ENCODE measurements at regions of chr12 and their contacts with region 1.

Region 1: DNA sequence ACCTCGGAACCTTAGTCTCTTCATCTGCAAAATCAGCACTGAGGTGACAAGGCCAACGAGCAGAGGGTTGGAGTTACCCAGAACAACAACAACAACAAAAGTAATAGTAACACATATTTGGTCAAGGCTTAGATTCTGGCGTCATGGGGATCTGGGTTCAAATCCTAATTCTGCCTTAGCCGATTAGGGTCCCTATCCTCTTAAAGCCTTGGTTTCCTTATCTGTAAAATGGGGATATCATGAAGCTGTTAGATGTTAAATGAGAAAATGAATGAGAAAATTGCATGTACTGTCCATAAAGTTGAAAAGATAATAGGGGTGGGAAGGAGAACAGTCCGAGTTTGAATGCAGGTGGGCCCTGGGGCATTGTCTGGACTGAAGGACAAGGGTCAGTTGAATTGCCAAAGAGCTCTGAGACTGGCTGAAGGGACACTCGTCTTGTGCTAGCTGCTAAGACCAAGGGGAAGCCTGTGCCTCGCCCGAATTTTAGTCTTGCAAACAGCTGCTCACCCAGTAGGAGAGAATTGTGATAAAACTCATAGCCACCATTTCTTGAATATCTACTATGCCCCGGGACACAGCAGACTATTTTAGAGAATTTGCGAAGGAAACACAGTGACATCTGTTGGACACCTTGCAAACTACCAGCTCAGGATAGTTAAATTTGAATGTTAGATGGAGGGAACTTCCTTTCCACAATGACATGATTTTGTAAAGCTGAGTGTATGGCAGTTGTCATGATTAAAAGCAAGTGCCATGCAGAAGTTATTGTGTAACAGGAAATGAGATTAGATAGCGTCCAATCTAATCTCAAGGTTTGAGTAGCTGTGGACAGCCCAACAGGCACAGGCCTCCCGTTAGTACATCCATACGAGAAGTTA is 6.8 kb upstream of the HNF1A start:
- DNase-seq: peak; percentile 57
- ATAC-seq: peak; percentile 98
- H3K4me3 Mint-ChIP-seq: no peak overlapping the region
- H3K27ac Mint-ChIP-seq: no peak overlapping the region
- H3K4me1 Mint-ChIP-seq: peaks cover 2% of the 10 kb centered on the region
- H3K27me3 Mint-ChIP-seq: no peaks in the 10 kb centered on the region
- CTCF ChIP-seq: peak; percentile 79

Region 2: DNA sequence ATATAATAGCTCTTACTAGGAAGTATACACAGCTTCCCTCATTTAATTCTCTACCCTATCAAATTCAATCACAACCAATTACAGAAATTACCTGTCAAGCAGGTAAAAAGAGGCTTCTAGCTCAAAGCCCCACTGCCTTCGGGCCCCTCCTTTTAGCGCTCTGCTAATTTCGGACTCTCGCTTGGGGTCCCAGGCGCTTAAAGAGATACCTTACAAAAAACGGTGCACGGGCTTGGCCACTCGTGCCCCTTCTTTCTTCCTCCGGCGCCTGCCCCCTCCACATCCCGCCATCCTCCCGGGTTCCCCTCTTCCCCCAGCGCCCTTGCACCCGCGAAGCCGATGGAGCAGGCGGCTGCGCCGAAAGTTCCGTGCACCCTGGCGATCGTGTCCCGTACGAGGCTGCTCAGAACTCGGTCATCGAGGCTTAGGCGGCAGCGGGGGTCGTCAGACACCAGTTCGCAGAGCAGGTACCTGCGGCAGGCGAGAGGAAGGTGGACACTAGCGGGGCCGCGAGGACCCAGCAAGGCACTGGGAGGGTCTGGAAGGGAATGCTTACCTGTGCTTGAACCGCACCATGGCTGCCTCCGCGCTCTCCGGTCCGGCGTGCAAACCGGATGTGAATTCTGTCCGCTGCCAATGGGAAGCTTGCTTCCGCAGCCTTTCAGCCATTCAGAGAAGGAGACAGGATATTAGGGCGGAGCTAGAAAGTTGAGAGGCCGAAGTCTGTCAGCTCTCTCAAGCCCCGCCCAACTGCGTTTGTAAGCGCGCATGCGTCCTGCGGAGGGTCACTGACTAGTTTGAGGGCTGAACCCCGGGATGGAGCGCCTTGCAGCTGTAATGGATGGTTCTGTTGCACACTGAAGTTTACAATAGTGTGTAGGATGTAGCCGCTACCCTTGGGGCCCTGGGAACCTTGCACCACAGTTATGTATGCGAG is 390.5 kb before region 1 on chr12 and contains the start of gene POP5:
- CTCF ChIA-PET with region 1: interaction called, 23 read pairs
- POLR2A ChIA-PET with region 1: no interaction called
- intact Hi-C with region 1: loop called (anchors 10 kb)
- DNase-seq: peak; percentile 97
- ATAC-seq: peak; percentile 96
- H3K4me3 Mint-ChIP-seq: peak within 1 kb of the TSS; percentile 98
- H3K27ac Mint-ChIP-seq: peak within 1 kb of the TSS; percentile 90
- H3K4me1 Mint-ChIP-seq: peaks cover 36% of the 10 kb centered on the region
- H3K27me3 Mint-ChIP-seq: peaks cover 13% of the 10 kb centered on the region
- CTCF ChIP-seq: no peak
- total RNA-seq, gene POP5: 44.3 to 51.1 TPM

Region 3: DNA sequence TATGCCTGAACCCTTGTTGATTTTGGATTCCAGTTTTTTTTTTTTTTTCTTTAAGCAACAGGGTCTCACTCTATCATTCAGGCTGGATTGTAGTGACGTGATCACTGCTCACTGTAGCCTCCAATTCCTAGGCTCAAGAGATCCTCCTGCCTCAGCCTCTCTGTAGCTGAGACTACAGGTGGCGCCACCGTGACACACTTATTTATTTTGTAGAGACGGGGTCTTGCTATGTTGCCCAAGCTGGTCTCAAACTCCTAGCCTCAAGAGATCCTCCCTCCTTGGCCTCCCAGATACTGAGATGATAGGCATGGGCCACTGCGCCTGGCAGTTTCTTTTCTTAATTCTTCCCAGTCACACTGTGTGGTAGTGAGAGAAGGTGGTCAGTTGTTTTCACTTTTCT is 220.7 kb before region 1 on chr12:
- CTCF ChIA-PET with region 1: interaction called, 13 read pairs
- POLR2A ChIA-PET with region 1: no interaction called
- intact Hi-C with region 1: no loop called
- DNase-seq: peak; percentile 21
- ATAC-seq: no peak
- H3K4me3 Mint-ChIP-seq: no peak overlapping the region
- H3K27ac Mint-ChIP-seq: no peak overlapping the region
- H3K4me1 Mint-ChIP-seq: no peaks in the 10 kb centered on the region
- H3K27me3 Mint-ChIP-seq: peaks cover 2% of the 10 kb centered on the region
- CTCF ChIP-seq: no peak

Region 4: GRCh38 chr12:120920178-120920577 is 51.4 kb before region 1 on chr12:
- CTCF ChIA-PET with region 1: no interaction called
- POLR2A ChIA-PET with region 1: no interaction called
- intact Hi-C with region 1: no loop called
- DNase-seq: no peak
- ATAC-seq: no peak
- H3K4me3 Mint-ChIP-seq: no peak overlapping the region
- H3K27ac Mint-ChIP-seq: no peak overlapping the region
- H3K4me1 Mint-ChIP-seq: no peaks in the 10 kb centered on the region
- H3K27me3 Mint-ChIP-seq: no peaks in the 10 kb centered on the region
- CTCF ChIP-seq: no peak

Region 5: DNA sequence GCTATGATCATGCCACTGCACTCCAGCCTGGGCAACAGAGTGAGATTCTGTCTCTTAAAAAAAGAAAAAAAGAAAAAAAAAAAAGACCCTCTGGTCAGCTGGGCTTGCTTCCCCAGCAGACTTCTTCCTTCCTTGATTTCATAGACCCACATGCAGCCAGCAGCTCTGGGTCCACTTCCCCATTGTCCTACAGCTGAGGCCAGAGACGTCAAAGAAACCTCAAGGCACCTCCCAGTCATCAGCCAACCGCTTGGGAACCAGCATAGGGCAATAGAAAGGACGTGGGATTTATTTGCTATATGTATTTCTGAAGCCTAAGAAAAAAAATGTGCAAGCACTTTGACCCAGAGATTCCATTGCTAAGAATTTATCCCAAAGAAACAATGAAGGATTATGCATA is 32.0 kb before region 1 on chr12:
- CTCF ChIA-PET with region 1: interaction called, 50 read pairs
- POLR2A ChIA-PET with region 1: no interaction called
- intact Hi-C with region 1: no loop called
- DNase-seq: no peak
- ATAC-seq: no peak
- H3K4me3 Mint-ChIP-seq: no peak overlapping the region
- H3K27ac Mint-ChIP-seq: no peak overlapping the region
- H3K4me1 Mint-ChIP-seq: peaks cover under 1% of the 10 kb centered on the region
- H3K27me3 Mint-ChIP-seq: no peaks in the 10 kb centered on the region
- CTCF ChIP-seq: no peak

Region 6: DNA sequence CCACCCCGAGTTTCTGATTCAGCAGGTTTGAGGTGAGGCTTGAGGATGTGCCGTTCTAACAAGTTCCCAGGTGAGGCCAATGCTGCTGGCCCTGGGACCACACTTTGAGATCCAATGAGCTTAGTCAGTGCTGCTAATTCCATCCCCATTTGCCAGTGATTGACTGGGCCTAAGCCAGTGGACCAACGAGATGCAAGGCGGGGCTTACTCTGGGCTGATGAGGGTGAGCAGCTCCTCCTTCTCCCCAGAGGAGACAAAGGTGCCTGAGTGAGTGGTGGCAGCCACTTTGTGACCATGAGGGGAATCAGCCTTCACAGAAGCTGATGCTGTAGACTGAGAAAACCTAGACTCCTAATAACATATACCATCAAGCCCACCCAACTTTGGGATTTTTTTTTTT is 16.3 kb before region 1 on chr12:
- CTCF ChIA-PET with region 1: interaction called, 50 read pairs
- POLR2A ChIA-PET with region 1: no interaction called
- intact Hi-C with region 1: no loop called
- DNase-seq: no peak
- ATAC-seq: no peak
- H3K4me3 Mint-ChIP-seq: no peak overlapping the region
- H3K27ac Mint-ChIP-seq: no peak overlapping the region
- H3K4me1 Mint-ChIP-seq: peaks cover 13% of the 10 kb centered on the region
- H3K27me3 Mint-ChIP-seq: no peaks in the 10 kb centered on the region
- CTCF ChIP-seq: no peak

Region 7: DNA sequence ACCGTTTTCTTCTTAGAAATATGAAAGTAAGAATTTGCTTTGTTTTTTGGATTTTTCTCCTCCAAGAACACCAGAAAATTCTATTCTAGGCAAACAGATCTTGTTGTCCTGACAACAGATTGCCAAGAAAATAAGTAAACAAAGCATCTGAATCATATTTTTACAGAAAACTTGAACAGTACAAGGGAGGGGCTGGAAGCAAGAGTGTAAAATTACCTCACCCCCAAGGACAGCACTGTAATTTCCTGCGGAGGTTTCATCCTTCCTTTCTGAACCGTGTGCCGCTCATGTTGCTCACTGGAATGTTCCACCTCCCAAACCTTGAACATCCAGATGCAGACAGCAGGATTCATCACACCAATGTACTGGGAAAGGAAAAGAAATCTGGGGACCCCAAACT is 330.3 kb after region 1 on chr12:
- CTCF ChIA-PET with region 1: no interaction called
- POLR2A ChIA-PET with region 1: no interaction called
- intact Hi-C with region 1: no loop called
- DNase-seq: no peak
- ATAC-seq: no peak
- H3K4me3 Mint-ChIP-seq: no peak overlapping the region
- H3K27ac Mint-ChIP-seq: no peak overlapping the region
- H3K4me1 Mint-ChIP-seq: peaks cover 8% of the 10 kb centered on the region
- H3K27me3 Mint-ChIP-seq: no peaks in the 10 kb centered on the region
- CTCF ChIP-seq: no peak